ENCODE measurements at regions of chr11 and their contacts with region 1.

Region 1: GRCh38 chr11:75388386-75389275 is 10.7 kb upstream of the RPS3 start:
- DNase-seq: no peak
- ATAC-seq: peak; percentile 79
- H3K4me3 ChIP-seq: no peak overlapping the region
- H3K27ac ChIP-seq: peak overlapping the region; percentile 69
- H3K4me1 ChIP-seq: peaks cover 39% of the 10 kb centered on the region
- H3K27me3 ChIP-seq: no peaks in the 10 kb centered on the region
- CTCF ChIP-seq: peak; percentile 94

Region 2: GRCh38 chr11:75280227-75280701 is 108.4 kb before region 1 on chr11:
- CTCF ChIA-PET with region 1: interaction called, 4 read pairs
- POLR2A ChIA-PET with region 1: no interaction called
- in situ Hi-C with region 1: no loop called
- intact Hi-C with region 1: loop called (anchors 1 kb)
- DNase-seq: peak; percentile 61
- ATAC-seq: peak; percentile 90
- H3K4me3 ChIP-seq: no peak overlapping the region
- H3K27ac ChIP-seq: peak overlapping the region; percentile 64
- H3K4me1 ChIP-seq: peaks cover 14% of the 10 kb centered on the region; the same call in 1 of the 2 replicates
- H3K27me3 ChIP-seq: no peaks in the 10 kb centered on the region
- CTCF ChIP-seq: peak; percentile 99

Region 3: DNA sequence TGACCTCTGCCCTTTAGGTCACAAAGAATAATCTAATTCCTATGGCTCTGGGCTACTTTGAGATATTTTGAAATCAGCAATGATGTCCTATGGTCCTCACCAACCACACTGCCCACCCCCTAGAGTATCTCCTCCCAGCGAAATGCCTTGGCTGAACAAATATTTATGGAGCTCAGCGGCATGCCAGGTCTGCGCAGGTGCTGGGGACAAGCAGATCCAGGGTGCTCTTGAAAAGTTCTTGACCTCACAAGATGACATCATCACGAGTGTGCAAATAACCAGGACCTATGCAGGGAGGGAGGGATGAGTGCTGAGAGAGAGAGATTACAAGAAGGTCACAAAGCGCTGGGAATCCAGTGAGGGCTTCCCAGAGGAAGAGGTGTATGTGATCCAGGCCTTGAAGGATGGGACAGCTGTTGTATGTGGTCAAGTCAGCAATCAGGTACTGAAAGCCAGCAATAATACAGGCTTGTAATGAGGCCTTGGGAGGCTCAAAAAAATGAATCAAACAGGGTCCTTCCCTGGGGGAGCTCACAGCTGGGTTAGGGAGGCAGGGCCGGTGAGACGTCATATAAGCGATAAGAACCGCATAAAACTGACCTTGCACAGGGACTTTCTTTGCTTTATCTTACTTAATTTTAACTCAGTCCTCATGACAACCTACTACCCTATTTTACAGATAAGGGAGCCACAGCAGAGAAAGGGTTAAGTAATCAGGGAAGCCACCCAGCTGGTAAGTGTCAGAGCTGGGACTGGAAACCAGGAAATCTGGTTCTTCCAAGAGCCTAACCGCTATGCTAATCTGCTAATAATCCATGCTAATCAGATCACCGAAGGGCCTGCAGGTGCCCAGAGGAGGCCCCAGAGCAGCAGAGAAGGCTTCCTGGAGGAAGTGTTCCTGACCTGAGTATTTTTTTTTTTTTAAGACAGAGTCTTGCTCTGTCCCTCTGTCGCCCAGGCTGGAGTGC is 45.4 kb before region 1 on chr11:
- CTCF ChIA-PET with region 1: interaction called, 9 read pairs
- POLR2A ChIA-PET with region 1: no interaction called
- in situ Hi-C with region 1: no loop called
- intact Hi-C with region 1: loop called (anchors 5 kb)
- DNase-seq: no peak
- ATAC-seq: peak; percentile 3
- H3K4me3 ChIP-seq: 0 out of 4 replicates have a peak overlapping the region, but pooled peaks of 1 of the 2 experiments have one; percentile 11
- H3K27ac ChIP-seq: peak overlapping the region; percentile 96
- H3K4me1 ChIP-seq: peaks cover 100% of the 10 kb centered on the region
- H3K27me3 ChIP-seq: no peaks in the 10 kb centered on the region
- CTCF ChIP-seq: peak; percentile 50; the same call in 1 of the 2 replicates

Region 4: GRCh38 chr11:75425422-75425821 is 36.8 kb after region 1 on chr11:
- CTCF ChIA-PET with region 1: interaction called, 8 read pairs
- POLR2A ChIA-PET with region 1: interaction called, 4 read pairs
- in situ Hi-C with region 1: no loop called
- intact Hi-C with region 1: loop called (anchors 2 kb)
- DNase-seq: no peak
- ATAC-seq: no peak
- H3K4me3 ChIP-seq: no peak overlapping the region
- H3K27ac ChIP-seq: no peak overlapping the region
- H3K4me1 ChIP-seq: peaks cover 27% of the 10 kb centered on the region
- H3K27me3 ChIP-seq: no peaks in the 10 kb centered on the region
- CTCF ChIP-seq: peak; percentile 78; the same call in 1 of the 2 replicates

Region 5: DNA sequence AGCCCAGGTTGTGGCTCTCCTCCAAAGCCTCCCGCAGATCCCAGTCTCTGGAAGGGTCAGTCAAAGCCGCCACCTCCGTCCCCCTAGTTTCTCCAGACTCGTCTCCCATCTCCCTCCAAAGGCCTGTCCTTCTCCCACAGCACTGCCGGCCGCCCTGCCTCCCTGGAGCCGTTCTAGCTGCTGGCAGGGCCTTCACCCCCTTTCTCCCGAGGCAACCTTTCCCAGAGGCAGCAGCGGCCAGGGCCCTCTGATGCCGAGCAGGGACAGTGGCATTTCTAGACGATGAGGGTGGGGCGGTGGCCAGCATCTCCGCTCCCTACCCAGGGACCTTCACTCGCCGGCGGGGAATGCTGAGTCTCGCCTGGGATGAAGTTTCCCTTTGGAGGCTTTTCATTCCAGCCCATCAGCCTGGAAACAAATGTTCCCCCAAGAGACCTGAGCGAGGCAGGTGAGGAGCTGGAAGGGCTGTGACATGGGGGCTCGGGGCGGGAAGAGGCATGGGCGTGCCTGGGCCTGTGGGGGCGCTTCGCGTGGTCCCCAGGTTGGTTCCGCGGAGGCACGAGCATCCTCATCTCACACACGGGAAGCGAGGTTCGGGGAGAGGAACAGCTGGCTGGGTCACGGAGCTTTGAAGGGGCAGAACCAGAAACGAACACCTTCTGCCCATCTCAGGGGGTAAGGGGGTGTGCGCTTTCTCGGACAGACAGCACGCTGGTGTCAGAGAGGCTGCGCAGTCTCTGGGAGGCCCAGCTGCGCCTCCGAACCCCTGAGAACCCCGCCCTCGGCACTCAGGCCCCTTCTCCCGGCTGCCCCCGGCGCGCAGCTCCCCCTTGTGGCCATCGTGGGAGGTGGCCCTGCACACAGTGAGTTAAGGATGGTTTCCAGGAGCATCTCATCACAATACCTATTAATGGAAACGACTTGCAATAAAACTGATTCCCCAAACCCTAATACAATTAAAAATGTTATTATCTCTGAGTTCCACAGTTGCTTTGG is 62.5 kb after region 1 on chr11:
- CTCF ChIA-PET with region 1: no interaction called
- POLR2A ChIA-PET with region 1: no interaction called
- in situ Hi-C with region 1: no loop called
- intact Hi-C with region 1: no loop called
- DNase-seq: no peak
- ATAC-seq: 0 out of 2 replicates have a peak, but pooled peaks have one; percentile 49
- H3K4me3 ChIP-seq: no peak overlapping the region
- H3K27ac ChIP-seq: no peak overlapping the region
- H3K4me1 ChIP-seq: no peaks in the 10 kb centered on the region
- H3K27me3 ChIP-seq: 0 out of 2 replicates have a peak, but pooled peaks cover 3% of the 10 kb centered on the region
- CTCF ChIP-seq: peak; percentile 95

Region 6: GRCh38 chr11:75492181-75492820 is 103.7 kb after region 1 on chr11:
- CTCF ChIA-PET with region 1: no interaction called
- POLR2A ChIA-PET with region 1: no interaction called
- in situ Hi-C with region 1: no loop called
- intact Hi-C with region 1: no loop called
- DNase-seq: no peak
- ATAC-seq: no peak
- H3K4me3 ChIP-seq: no peak overlapping the region
- H3K27ac ChIP-seq: peak overlapping the region; percentile 25; the same call in 1 of the 2 replicates
- H3K4me1 ChIP-seq: peaks cover 3% of the 10 kb centered on the region; the same call in 1 of the 2 replicates
- H3K27me3 ChIP-seq: no peaks in the 10 kb centered on the region
- CTCF ChIP-seq: no peak

Region 7: DNA sequence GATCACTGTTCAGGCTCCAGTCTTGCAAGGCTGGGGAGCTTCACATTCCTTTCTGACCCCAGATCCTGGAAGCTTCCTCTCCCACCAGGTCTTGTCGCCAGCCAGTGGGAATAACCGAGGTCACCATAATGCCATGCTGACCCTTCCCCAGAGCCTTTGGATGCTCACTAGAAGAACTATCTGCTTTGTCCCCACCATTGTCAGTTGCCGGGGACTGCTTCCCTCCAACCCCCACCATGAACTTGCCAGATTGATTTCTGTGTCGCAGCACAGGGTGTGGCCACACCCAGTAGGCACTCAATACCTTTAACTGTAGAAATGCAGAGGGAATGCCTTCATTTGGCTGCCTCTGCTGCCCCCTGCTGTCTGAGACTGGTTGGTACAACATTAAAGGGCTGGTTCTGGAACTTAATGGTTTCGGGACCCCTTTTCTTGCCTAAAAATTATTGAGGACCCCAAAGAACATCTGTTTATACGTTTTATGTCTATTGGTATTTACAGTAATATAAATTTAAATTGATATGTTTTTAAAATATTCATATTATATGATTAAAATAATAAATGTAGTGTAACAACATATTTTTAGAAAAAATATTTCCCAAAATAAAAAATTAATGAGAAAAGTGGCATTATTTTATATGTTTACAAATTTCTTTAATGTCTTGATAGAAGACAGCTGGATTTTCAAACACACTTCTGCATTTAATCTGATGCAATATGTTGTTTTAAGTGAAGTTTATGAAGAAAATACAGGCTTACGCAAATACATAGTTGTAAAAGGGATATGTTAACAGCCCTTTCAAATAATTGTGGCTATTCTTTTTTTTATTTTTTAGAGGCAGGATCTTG is 143.8 kb after region 1 on chr11:
- CTCF ChIA-PET with region 1: interaction called, 17 read pairs
- POLR2A ChIA-PET with region 1: no interaction called
- in situ Hi-C with region 1: no loop called
- intact Hi-C with region 1: loop called (anchors 1 kb)
- DNase-seq: peak; percentile 58
- ATAC-seq: peak; percentile 75
- H3K4me3 ChIP-seq: no peak overlapping the region; a peak in 1 of 4 replicates
- H3K27ac ChIP-seq: 0 out of 2 replicates have a peak overlapping the region, but pooled peaks have one; percentile 2
- H3K4me1 ChIP-seq: peaks cover 20% of the 10 kb centered on the region
- H3K27me3 ChIP-seq: no peaks in the 10 kb centered on the region
- CTCF ChIP-seq: peak; percentile 94

Measured in Panc1 (cell line).